Activated CD4-positive, alpha-beta T cell treated with anti-CD3 and anti-CD28 coated beads, Interleukin-2, amount 10 ng/mL, durations not matched to agents 24 days and 14 days (primary cell): ENCODE measurements at regions of chr9 and their contacts with region 1.

Region 1: GRCh38 chr9:128067876-128068613 is at the start of gene SLC25A25:
- DNase-seq: peak; percentile 100
- H3K4me3 Mint-ChIP-seq: peak within 1 kb of the TSS; percentile 93
- H3K27ac Mint-ChIP-seq: peak within 1 kb of the TSS; percentile 84
- H3K4me1 Mint-ChIP-seq: peaks cover 43% of the 10 kb centered on the region
- H3K27me3 Mint-ChIP-seq: no peaks in the 10 kb centered on the region
- total RNA-seq, gene SLC25A25: 12.2 and 14.0 TPM in 2 replicates

Region 2: DNA sequence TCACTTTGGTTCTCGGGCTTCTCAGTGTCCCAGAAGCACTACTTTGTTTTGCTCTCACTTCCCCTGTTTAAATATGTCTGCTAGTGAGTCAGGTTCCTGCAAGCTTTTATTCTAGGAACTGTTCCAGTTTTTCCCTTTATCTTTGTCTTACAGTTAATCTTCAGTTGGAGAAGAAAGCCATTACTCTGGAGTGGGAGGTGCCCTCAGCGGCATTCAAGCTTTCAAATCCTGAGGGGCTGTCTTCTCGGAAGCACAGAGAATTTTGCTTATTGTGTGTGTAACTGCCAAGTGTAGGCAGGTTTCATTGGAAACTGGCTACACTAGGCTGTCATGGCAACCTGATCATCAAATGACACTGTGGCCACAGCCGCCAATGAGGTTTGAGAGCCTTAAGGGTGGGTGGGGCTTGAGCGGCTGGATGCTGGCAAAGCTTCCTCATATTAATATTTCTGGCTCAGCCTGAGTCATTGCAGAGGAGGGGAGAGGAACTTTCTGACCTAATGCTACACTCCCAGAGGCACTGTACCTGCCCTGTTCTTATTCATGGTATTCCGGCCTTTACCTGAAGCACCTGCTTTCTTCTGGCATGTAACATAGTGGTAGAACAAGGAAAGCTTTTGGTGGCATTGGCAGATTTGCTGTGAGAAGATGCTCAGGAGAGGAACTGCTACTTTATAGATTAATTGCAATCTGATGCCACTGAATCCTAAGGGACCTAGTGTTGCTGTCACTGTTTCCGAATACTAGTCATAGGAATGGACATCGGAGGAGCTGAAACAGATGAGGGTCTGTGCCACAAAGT is 26.3 kb after region 1 on chr9:
- intact Hi-C with region 1: loop called (anchors 1 kb)
- DNase-seq: peak; percentile 95
- H3K4me3 Mint-ChIP-seq: peak overlapping the region; percentile 85
- H3K27ac Mint-ChIP-seq: peak overlapping the region; percentile 98
- H3K4me1 Mint-ChIP-seq: peaks cover 55% of the 10 kb centered on the region
- H3K27me3 Mint-ChIP-seq: no peaks in the 10 kb centered on the region